Activated naive CD4-positive, alpha-beta T cell treated with anti-CD3 and anti-CD28 coated beads, Interleukin-2, amount 10 ng/mL, durations not matched to agents 7 days and 5 days (primary cell): ENCODE measurements at regions of chr16 and their contacts with region 1.

Region 1: GRCh38 chr16:11370084-11370931 is 25.0 kb downstream of the RMI2 start:
- DNase-seq: peak; percentile 34
- H3K4me3 Mint-ChIP-seq: no peak overlapping the region
- H3K27ac Mint-ChIP-seq: no peak overlapping the region
- H3K4me1 Mint-ChIP-seq: peaks cover 22% of the 10 kb centered on the region
- H3K27me3 Mint-ChIP-seq: peaks cover 20% of the 10 kb centered on the region

Region 2: DNA sequence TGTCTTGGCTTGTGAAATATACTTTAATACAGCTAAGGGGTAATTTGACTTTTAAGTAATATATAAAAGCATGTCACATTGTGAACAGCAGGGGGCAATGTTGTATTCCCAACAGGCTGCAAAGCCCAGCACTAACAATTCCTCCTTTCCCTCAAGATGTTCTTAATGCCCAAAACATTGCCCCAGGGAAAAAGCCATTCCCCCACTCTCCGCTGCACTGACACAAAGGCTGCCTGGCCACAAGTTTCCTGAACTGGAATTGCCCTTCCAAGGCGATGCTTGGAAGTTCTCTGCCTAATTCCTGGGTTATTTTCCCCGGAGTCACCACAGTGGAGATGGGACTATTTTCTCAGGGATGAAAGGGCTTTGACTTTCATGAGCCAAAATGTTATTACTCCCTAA is 398.7 kb before region 1 on chr16:
- CTCF ChIA-PET with region 1: interaction called, 21 read pairs
- DNase-seq: peak; percentile 51
- H3K4me3 Mint-ChIP-seq: no peak overlapping the region
- H3K27ac Mint-ChIP-seq: peak overlapping the region; percentile 35
- H3K4me1 Mint-ChIP-seq: peaks cover 77% of the 10 kb centered on the region
- H3K27me3 Mint-ChIP-seq: no peaks in the 10 kb centered on the region

Region 3: GRCh38 chr16:11386791-11387546 is 16.7 kb after region 1 on chr16:
- CTCF ChIA-PET with region 1: interaction called, 28 read pairs
- DNase-seq: no peak
- H3K4me3 Mint-ChIP-seq: no peak overlapping the region
- H3K27ac Mint-ChIP-seq: no peak overlapping the region
- H3K4me1 Mint-ChIP-seq: peaks cover 19% of the 10 kb centered on the region
- H3K27me3 Mint-ChIP-seq: peaks cover 18% of the 10 kb centered on the region

Region 4: GRCh38 chr16:11423315-11424117 is 53.2 kb after region 1 on chr16:
- CTCF ChIA-PET with region 1: no interaction called
- DNase-seq: no peak
- H3K4me3 Mint-ChIP-seq: no peak overlapping the region
- H3K27ac Mint-ChIP-seq: no peak overlapping the region
- H3K4me1 Mint-ChIP-seq: no peaks in the 10 kb centered on the region
- H3K27me3 Mint-ChIP-seq: no peaks in the 10 kb centered on the region